ENCODE measurements at regions of chr19 and their contacts with region 1.

Region 1: DNA sequence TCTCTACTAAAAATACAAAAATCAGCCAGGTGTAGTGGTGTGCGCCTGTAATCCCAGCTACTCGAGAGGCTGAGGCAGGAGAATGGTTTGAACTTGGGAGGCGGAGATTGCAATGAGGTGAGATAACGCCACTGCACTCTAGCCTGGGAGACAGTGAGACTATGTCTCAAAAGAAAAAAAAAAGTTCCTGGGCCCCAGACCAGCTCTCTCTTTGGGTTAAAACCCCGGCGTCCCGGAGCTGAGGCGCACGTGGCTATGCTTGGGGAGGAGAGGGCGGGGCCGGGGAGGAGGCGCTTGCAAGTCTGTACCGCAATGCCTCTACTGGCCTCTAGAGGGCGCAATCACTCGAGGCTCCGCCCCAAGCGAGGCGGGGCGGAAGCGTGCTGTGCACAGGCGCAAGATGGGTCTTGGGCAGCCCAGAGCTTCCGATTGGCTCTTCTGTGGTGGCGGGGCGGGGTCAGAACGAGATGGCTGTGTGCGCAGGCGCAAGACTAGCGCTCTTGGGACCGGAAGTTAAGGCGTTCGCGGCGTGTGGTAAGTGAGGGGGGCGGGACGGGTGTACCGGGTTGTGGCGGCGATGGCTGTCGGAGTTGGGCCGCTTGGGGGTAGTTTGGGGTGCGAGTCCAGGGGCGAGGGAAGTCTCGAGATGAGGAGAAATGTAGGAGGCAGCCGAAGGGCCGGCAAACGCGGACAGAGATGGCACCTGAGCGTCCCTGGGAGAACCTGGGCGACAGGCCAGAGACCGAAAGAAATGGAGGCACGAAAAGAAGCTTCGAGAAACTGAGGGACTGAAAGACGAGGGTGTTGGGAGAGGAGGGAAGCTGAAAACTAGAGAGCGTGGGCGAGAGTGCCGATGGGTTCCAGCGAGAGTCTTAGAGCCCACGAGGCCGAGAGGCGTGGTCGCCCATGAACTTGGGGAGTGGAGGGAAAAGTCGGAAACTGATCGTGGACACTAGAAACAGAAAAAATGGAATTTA is at the start of gene DHX34:
- DNase-seq: peak; percentile 90
- H3K4me3 ChIP-seq: peak within 1 kb of the TSS; percentile 98
- CTCF ChIP-seq: peak; percentile 95

Region 2: DNA sequence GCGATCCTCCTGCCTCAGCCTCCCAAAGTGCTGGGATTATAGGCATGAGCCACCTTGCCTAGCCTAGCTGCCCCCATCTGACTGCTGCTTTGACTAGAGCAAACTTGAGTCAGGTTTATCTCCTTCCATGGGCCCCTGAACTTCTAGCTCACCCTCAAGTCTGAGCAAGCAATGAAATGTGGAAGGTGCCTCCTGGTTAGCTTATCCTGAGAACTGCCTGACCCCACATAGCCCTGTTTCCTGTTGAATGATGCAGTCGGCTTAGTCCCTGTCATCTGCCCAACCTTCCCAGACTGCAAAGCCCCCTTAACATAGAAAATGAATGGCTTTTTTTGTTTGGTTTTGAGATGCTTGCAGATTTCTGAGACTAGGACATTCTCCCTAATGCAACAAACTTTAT is 291.8 kb before region 1 on chr19:
- CTCF ChIA-PET with region 1: no interaction called
- POLR2A ChIA-PET with region 1: no interaction called
- DNase-seq: no peak
- H3K4me3 ChIP-seq: no peak overlapping the region
- CTCF ChIP-seq: no peak

Region 3: DNA sequence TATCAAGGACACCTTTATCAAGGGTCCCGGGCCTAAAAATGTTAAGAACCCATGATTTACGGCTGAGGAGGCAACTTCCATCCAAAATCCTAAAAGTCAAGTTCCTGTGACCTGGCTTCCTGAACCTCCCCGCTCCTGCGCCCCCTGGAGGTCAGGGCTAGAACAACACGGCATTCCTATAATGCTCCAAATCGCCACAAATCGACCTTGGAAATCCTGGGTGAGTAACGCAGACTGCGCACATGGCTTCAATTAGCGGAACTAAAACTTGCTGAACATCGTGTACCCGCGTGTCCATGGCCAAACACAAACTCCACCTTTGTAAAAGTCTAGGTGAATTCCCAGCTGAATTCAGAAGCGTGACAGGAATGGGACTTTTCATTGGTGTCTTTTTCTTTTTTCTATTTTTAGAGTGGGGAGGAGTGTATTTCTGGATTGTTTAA is 43.8 kb before region 1 on chr19:
- CTCF ChIA-PET with region 1: interaction called, 18 read pairs
- POLR2A ChIA-PET with region 1: no interaction called
- DNase-seq: peak; percentile 41
- H3K4me3 ChIP-seq: peak overlapping the region; percentile 16; the same call in 1 of the 2 replicates
- CTCF ChIP-seq: peak; percentile 92

Region 4: GRCh38 chr19:47324502-47324901 is 24.6 kb before region 1 on chr19:
- CTCF ChIA-PET with region 1: interaction called, 74 read pairs
- POLR2A ChIA-PET with region 1: no interaction called
- DNase-seq: no peak
- H3K4me3 ChIP-seq: no peak overlapping the region
- CTCF ChIP-seq: no peak

Region 5: GRCh38 chr19:47336853-47337279 is 12.2 kb before region 1 on chr19:
- CTCF ChIA-PET with region 1: interaction called, 74 read pairs
- POLR2A ChIA-PET with region 1: no interaction called
- DNase-seq: no peak
- H3K4me3 ChIP-seq: no peak overlapping the region
- CTCF ChIP-seq: no peak

Region 6: GRCh38 chr19:47381653-47382279 is 32.7 kb after region 1 on chr19:
- CTCF ChIA-PET with region 1: interaction called, 11 read pairs
- POLR2A ChIA-PET with region 1: interaction called, 3 read pairs
- DNase-seq: no peak
- H3K4me3 ChIP-seq: no peak overlapping the region
- CTCF ChIP-seq: no peak

Region 7: DNA sequence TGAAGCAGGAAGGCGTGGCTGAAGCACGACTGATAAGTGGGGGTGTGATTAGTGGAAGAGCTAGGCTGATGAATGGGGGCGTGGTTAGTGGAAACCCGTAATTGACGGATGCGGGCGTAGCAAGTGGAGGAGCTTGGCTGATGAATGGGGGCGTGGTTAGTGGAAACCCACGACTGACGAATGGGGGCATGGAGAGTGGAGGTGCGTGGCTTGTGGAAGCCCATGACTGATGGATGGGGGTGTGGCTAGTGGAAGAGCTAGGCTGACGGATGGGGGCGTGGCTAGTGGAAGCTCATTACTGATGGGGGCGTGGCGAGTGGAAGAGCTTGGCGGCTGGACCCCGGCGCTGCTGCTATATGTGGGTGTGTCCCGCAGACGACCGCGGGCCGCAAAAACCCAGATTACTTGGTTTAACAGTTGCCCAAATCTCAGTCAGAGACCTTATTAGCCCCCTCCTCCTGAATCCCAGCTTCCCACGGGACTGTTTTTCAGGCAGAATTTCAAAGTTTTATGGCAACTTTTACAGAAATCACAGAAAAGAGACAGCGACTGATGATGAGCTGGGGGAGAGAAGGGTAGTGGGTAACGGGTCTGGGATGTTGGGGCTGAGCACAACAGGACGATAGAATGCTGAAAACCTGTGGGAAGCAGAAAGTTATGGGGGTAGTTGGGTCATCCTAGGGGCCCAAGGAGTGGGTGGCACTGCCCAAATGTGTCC is 79.2 kb after region 1 on chr19:
- CTCF ChIA-PET with region 1: interaction called, 15 read pairs
- POLR2A ChIA-PET with region 1: no interaction called
- DNase-seq: peak; percentile 75
- H3K4me3 ChIP-seq: peak overlapping the region; percentile 51
- CTCF ChIP-seq: no peak